ENCODE measurements at regions of chr1 and their contacts with region 1.

Region 1: GRCh38 chr1:63010913-63011660 is 227.2 kb downstream of the ATG4C start:
- DNase-seq: no peak
- ATAC-seq: no peak
- H3K4me3 ChIP-seq: no peak overlapping the region
- H3K4me3 Mint-ChIP-seq: no peak overlapping the region
- H3K27ac ChIP-seq: no peak overlapping the region
- H3K27ac Mint-ChIP-seq: no peak overlapping the region
- H3K4me1 ChIP-seq: no peaks in the 10 kb centered on the region
- H3K4me1 Mint-ChIP-seq: no peaks in the 10 kb centered on the region
- H3K27me3 ChIP-seq: no peaks in the 10 kb centered on the region
- H3K27me3 Mint-ChIP-seq: no peaks in the 10 kb centered on the region
- CTCF ChIP-seq: no peak

Region 2: DNA sequence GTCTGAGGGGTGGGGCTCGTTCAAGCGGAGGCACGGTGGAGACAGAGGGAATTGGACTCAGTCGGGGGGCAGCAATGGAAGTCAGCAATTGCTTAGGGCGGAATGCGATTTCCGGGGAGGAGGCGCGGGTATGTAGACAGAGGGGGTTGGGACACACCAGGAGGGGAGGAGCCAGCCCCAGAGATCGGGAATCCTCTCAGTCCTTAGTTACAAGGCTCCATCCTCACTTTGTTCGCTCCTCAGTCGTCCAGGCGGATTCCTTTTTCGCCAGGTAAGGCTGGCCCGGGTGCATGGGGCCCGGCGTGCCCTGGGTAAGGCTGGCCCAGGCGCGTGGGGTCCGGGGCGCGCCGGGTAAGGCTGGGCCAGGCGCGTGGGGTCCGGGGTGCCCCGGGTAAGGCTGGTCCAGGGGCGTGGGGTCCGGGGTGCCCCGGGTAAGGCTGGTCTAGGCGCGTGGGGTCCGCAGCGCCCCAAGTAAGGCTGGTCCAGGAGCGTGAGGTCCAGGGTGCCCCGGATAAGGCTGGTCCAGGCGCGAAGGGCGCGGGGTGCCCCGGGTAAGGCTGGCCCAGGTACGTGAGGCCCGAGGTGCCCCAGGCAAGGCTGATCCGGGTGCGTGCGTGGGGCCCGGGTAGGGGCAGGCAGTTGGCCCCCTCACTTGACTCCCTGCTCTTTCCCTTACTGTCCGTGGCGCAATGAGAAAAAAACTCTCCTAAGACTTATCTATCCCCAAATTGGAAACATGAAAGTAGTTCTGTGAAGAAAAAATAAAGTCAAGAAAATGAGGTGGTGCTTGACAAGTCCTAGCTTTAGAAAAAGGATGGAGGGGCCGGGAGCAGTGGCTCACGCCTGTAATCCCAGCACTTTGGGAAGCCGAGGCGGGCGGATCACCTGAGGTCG is 816.2 kb before region 1 on chr1 and contains the start of gene L1TD1:
- CTCF ChIA-PET with region 1: no interaction called
- POLR2A ChIA-PET with region 1: no interaction called
- intact Hi-C with region 1: loop called in 1 of 2 experiments (anchors 5 kb)
- DNase-seq: no peak
- ATAC-seq: no peak
- H3K4me3 ChIP-seq: no peak within 1 kb of the TSS
- H3K4me3 Mint-ChIP-seq: no peak within 1 kb of the TSS
- H3K27ac ChIP-seq: no peak within 1 kb of the TSS
- H3K27ac Mint-ChIP-seq: no peak within 1 kb of the TSS
- H3K4me1 ChIP-seq: no peaks in the 10 kb centered on the region
- H3K4me1 Mint-ChIP-seq: peaks cover 5% of the 10 kb centered on the region
- H3K27me3 ChIP-seq: peaks cover 30 to 42% of the 10 kb centered on the region in 2 experiments
- H3K27me3 Mint-ChIP-seq: peaks cover 48% of the 10 kb centered on the region
- CTCF ChIP-seq: no peak
- total RNA-seq, gene L1TD1: 0.06 TPM in 1 of 2 experiments, not detected in the other

Region 3: DNA sequence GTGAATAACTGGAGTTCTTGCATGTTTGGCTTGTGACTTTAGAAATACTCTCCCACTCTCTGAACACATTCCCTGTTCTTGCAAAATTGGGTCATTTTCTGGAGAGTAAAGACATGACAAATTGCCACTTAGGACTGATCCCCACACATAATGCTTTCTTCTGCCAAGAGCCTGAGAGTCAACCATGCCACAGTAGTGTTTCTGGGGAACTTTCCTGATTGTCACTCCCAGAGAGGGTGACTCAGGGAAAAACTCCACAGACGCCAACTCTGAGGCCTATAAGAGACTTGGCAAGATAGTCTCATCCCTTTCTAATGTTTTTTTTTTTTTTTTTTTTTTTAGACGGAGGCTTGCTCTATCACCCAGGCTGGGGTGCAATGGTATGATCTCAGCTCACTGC is 69.3 kb before region 1 on chr1:
- CTCF ChIA-PET with region 1: no interaction called
- POLR2A ChIA-PET with region 1: no interaction called
- intact Hi-C with region 1: no loop called
- DNase-seq: no peak
- ATAC-seq: no peak
- H3K4me3 ChIP-seq: no peak overlapping the region
- H3K4me3 Mint-ChIP-seq: no peak overlapping the region
- H3K27ac ChIP-seq: no peak overlapping the region
- H3K27ac Mint-ChIP-seq: no peak overlapping the region
- H3K4me1 ChIP-seq: no peaks in the 10 kb centered on the region
- H3K4me1 Mint-ChIP-seq: no peaks in the 10 kb centered on the region
- H3K27me3 ChIP-seq: no peaks in the 10 kb centered on the region
- H3K27me3 Mint-ChIP-seq: peaks cover 18% of the 10 kb centered on the region
- CTCF ChIP-seq: no peak

Region 4: DNA sequence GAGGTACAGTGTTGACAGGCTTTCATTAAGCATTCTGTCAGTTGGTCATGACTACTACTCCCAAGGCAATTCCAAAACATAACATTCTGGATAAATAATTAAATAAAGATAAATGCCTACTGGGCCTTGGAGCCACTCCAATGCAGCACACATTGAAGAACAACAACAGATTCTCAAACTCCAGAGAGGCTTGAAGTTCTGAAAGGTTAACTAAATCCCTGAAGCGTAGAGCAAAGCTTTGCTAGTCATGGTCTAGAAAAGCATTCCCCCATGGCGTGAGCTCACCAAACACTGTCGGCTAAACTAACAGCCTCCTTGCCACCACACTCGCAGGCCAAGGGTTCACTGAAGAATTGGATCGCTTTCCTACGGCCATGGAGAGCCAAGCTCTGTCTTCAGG is 40.8 kb after region 1 on chr1:
- CTCF ChIA-PET with region 1: no interaction called
- POLR2A ChIA-PET with region 1: no interaction called
- intact Hi-C with region 1: no loop called
- DNase-seq: no peak
- ATAC-seq: no peak
- H3K4me3 ChIP-seq: no peak overlapping the region
- H3K4me3 Mint-ChIP-seq: no peak overlapping the region
- H3K27ac ChIP-seq: no peak overlapping the region
- H3K27ac Mint-ChIP-seq: no peak overlapping the region
- H3K4me1 ChIP-seq: no peaks in the 10 kb centered on the region
- H3K4me1 Mint-ChIP-seq: no peaks in the 10 kb centered on the region
- H3K27me3 ChIP-seq: peaks cover 0 to 3% of the 10 kb centered on the region in 2 experiments
- H3K27me3 Mint-ChIP-seq: peaks cover 12% of the 10 kb centered on the region
- CTCF ChIP-seq: no peak